SK-N-SH (cell line): ENCODE measurements at regions of chr5 and their contacts with region 1.

Region 1: DNA sequence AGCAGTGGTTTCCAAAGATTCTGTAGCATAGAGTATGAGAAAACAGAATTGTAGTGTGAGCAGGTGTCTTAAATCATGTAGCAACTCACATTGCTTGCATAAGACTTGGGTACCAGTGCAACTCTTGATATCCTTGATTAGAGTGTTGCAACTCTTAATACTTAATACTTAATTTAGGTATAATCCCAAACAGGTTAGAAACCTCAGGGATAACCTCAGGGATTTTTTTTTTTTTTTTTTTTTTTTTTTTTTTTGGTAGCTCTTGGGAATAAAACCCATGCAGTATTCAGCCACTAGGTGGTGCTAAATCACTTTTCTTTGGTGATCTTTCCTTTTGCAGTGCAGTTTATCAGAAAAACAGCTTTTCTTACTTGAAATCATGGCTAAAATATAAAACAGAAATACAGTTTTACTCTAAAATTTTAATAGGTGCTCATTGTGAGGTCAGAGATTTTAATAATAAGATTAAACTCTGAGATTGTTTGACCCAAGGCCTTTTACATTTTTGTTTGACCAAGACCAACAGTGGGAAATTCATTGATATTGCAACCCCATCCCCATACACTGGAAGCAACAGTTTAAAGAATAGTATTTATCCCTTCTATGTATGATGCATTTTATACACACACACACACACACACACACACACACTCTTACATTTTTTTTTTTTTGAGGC is 55.3 kb downstream of the ERAP1 start:
- DNase-seq: peak; percentile 19
- H3K4me3 ChIP-seq: no peak overlapping the region
- H3K27ac ChIP-seq: no peak overlapping the region
- H3K4me1 ChIP-seq: peaks cover 0 to 10% of the 10 kb centered on the region in 2 experiments; a peak in 2 of 4 replicates
- H3K27me3 ChIP-seq: no peaks in the 10 kb centered on the region
- CTCF ChIP-seq: peak; percentile 68
- EP300 ChIP-seq: no peak
- RAD21 ChIP-seq: peak; percentile 79

Region 2: GRCh38 chr5:96391921-96392320 is 360.6 kb before region 1 on chr5:
- CTCF ChIA-PET with region 1: no interaction called
- POLR2A ChIA-PET with region 1: no interaction called
- DNase-seq: no peak
- H3K4me3 ChIP-seq: no peak overlapping the region
- H3K27ac ChIP-seq: no peak overlapping the region
- H3K4me1 ChIP-seq: peaks cover 0 to 6% of the 10 kb centered on the region in 2 experiments; a peak in 2 of 4 replicates
- H3K27me3 ChIP-seq: no peaks in the 10 kb centered on the region
- CTCF ChIP-seq: no peak
- EP300 ChIP-seq: no peak
- RAD21 ChIP-seq: no peak

Region 3: DNA sequence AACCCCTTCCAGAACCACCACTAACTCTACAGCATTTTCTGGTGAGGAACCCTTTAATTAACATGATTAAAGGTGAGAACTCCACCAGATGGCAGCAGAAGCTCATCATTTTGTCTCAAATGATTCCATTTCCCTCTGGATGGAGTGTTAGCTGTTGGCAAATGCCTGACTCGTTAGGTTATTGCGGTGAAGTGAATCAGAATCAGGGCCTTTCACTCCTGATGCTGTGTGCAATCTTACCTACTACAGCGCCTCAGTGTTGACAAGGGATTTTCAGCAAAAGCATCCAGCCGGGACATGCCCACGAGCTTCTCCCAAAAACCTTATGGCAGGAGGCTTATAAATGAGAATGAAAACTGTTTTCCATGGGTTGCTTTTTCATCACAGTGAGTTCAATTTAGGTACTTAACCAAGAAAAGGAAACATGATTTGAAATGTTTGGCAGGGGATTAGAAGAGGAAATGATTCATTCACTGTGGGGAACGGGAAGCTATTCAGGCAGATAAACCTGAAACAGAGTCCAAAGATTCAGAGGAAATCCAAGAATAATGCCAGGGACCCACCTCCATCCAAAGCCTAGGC is 138.3 kb before region 1 on chr5:
- CTCF ChIA-PET with region 1: interaction called, 12 read pairs
- POLR2A ChIA-PET with region 1: no interaction called
- DNase-seq: peak; percentile 64
- H3K4me3 ChIP-seq: peak overlapping the region; percentile 10 to 58; a peak in 2 of 4 replicates
- H3K27ac ChIP-seq: peak overlapping the region; percentile 17 to 89; a peak in 3 of 4 replicates
- H3K4me1 ChIP-seq: peaks cover 0 to 16% of the 10 kb centered on the region in 2 experiments; a peak in 1 of 4 replicates
- H3K27me3 ChIP-seq: no peaks in the 10 kb centered on the region
- CTCF ChIP-seq: peak; percentile 71
- EP300 ChIP-seq: peak in 1 of 2 experiments; percentile 47; a peak in 1 of 4 replicates
- RAD21 ChIP-seq: peak; percentile 91

Region 4: GRCh38 chr5:96768708-96769251 is 16.3 kb after region 1 on chr5:
- CTCF ChIA-PET with region 1: interaction called, 13 read pairs
- POLR2A ChIA-PET with region 1: no interaction called
- DNase-seq: no peak
- H3K4me3 ChIP-seq: no peak overlapping the region
- H3K27ac ChIP-seq: no peak overlapping the region
- H3K4me1 ChIP-seq: no peaks in the 10 kb centered on the region
- H3K27me3 ChIP-seq: no peaks in the 10 kb centered on the region
- CTCF ChIP-seq: no peak
- EP300 ChIP-seq: no peak
- RAD21 ChIP-seq: no peak

Region 5: DNA sequence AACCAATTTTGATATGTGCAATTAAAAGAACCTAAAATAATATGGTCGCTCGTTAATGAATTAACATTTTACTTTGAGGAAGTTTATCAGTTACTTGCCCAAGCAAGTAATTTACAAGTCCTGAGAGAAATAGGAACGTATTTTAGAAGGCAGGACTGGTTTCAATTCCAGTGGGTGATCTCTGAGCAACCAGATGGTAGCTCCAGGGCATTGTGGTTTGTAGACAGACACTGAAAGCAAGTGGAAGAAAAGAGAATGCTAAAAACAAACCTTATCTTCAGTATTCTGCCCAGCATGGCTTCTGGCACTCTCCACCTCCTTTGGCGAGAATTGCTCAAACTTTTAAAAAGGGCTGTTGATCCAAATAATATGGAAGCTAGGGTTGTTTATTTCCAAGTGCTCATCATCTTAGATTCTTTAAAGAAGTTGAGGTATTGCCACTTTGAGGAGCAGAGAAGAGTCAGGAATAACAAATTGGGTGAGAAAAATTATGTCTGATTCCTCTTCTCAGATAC is 92.1 kb after region 1 on chr5:
- CTCF ChIA-PET with region 1: no interaction called
- POLR2A ChIA-PET with region 1: no interaction called
- DNase-seq: peak; percentile 47
- H3K4me3 ChIP-seq: no peak overlapping the region
- H3K27ac ChIP-seq: no peak overlapping the region
- H3K4me1 ChIP-seq: no peaks in the 10 kb centered on the region; a peak in 1 of 4 replicates
- H3K27me3 ChIP-seq: no peaks in the 10 kb centered on the region
- CTCF ChIP-seq: no peak
- EP300 ChIP-seq: 0 out of 4 replicates have a peak, but pooled peaks of 1 of the 2 experiments have one; percentile 34
- RAD21 ChIP-seq: no peak

Region 6: GRCh38 chr5:96876292-96876850 is 123.9 kb after region 1 on chr5 and contains the start of gene ERAP2:
- CTCF ChIA-PET with region 1: interaction called, 11 read pairs
- POLR2A ChIA-PET with region 1: no interaction called
- DNase-seq: no peak
- H3K4me3 ChIP-seq: peak within 1 kb of the TSS; percentile 37 to 52; a peak in 3 of 4 replicates
- H3K27ac ChIP-seq: peak within 1 kb of the TSS in 1 of 2 experiments; percentile 1; a peak in 1 of 4 replicates
- H3K4me1 ChIP-seq: no peaks in the 10 kb centered on the region; a peak in 2 of 4 replicates
- H3K27me3 ChIP-seq: no peaks in the 10 kb centered on the region
- CTCF ChIP-seq: no peak
- EP300 ChIP-seq: no peak
- RAD21 ChIP-seq: no peak
- polyA plus RNA-seq, gene ERAP2: 13.2 and 14.3 TPM in 2 replicates

Region 7: DNA sequence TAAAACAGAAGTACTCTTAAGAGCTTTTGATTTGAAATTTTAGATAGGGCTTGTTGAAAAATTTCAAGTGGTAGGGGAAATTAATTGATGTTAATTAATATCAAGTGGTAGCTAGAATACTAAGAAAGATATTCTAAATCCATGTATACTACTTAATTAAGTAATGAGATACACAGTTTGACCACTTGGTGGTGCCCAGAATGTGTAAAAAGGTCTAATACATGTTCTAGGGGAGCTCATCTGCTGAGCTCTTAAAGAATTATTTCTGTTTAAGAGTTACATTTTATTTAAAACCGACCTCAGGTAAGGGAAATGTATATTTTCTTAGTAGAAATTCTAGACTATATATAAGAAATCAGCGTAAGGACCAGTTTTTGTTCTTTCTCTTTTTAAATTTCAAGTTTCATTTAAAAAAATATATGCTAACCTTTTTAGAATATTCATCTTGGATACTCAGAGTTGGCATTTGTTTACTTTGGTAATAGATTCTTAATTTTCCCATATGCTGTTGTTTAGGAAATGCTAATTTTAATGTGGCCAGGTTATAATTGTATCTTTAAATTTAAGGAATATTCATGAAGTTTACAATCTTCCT is 244.9 kb after region 1 on chr5:
- CTCF ChIA-PET with region 1: interaction called, 30 read pairs
- POLR2A ChIA-PET with region 1: no interaction called
- DNase-seq: peak; percentile 21
- H3K4me3 ChIP-seq: no peak overlapping the region
- H3K27ac ChIP-seq: no peak overlapping the region
- H3K4me1 ChIP-seq: no peaks in the 10 kb centered on the region
- H3K27me3 ChIP-seq: no peaks in the 10 kb centered on the region
- CTCF ChIP-seq: peak; percentile 74
- EP300 ChIP-seq: no peak
- RAD21 ChIP-seq: peak; percentile 74

Region 8: GRCh38 chr5:97142521-97143254 is 390.2 kb after region 1 on chr5 and contains the start of gene LIX1:
- CTCF ChIA-PET with region 1: interaction called, 60 read pairs
- POLR2A ChIA-PET with region 1: no interaction called
- DNase-seq: peak; percentile 68
- H3K4me3 ChIP-seq: no peak within 1 kb of the TSS
- H3K27ac ChIP-seq: no peak within 1 kb of the TSS
- H3K4me1 ChIP-seq: peaks cover 0 to 3% of the 10 kb centered on the region in 2 experiments; a peak in 2 of 4 replicates
- H3K27me3 ChIP-seq: no peaks in the 10 kb centered on the region
- CTCF ChIP-seq: peak; percentile 67
- EP300 ChIP-seq: peak in 1 of 2 experiments; percentile 56; a peak in 1 of 4 replicates
- RAD21 ChIP-seq: peak; percentile 88
- polyA plus RNA-seq, gene LIX1: 0.02 TPM in 1 of 2 replicates, not detected in the other

Region 9: GRCh38 chr5:97162045-97162444 is 409.6 kb after region 1 on chr5:
- CTCF ChIA-PET with region 1: interaction called, 118 read pairs
- POLR2A ChIA-PET with region 1: no interaction called
- DNase-seq: peak; percentile 45
- H3K4me3 ChIP-seq: no peak overlapping the region; a peak in 1 of 4 replicates
- H3K27ac ChIP-seq: no peak overlapping the region
- H3K4me1 ChIP-seq: no peaks in the 10 kb centered on the region
- H3K27me3 ChIP-seq: no peaks in the 10 kb centered on the region
- CTCF ChIP-seq: peak; percentile 96
- EP300 ChIP-seq: no peak
- RAD21 ChIP-seq: peak; percentile 89

Region 10: GRCh38 chr5:97726106-97726505 is 973.6 kb after region 1 on chr5:
- CTCF ChIA-PET with region 1: no interaction called
- POLR2A ChIA-PET with region 1: no interaction called
- DNase-seq: no peak
- H3K4me3 ChIP-seq: no peak overlapping the region
- H3K27ac ChIP-seq: no peak overlapping the region
- H3K4me1 ChIP-seq: no peaks in the 10 kb centered on the region
- H3K27me3 ChIP-seq: no peaks in the 10 kb centered on the region
- CTCF ChIP-seq: peak; percentile 36
- EP300 ChIP-seq: no peak
- RAD21 ChIP-seq: no peak